ENCODE measurements at regions of chr2 and their contacts with region 1.

Region 1: DNA sequence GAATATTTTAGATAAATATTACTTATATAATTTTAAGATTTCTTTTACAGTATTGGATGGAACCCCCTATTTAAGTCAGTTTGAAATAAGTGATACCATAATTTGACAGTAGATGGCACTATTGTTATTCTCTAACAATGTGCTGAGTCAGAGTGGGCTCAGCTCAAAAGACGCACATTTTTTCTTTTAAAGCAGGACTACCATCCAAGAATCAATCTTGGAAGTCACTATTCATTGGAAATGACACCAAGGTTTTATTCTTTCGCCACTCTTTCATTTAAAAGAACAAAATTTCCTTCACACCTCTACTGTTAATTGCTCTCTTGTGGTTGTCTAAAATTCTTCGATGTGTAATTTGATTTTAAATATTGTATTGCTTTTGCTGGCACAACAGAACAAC is 32.6 kb upstream of the SPAG16 start:
- DNase-seq: peak in 2 of 9 experiments; percentile 59 to 71
- ATAC-seq: no peak
- H3K4me3 ChIP-seq: no peak overlapping the region
- H3K4me3 Mint-ChIP-seq: no peak overlapping the region
- H3K27ac ChIP-seq: no peak overlapping the region
- H3K27ac Mint-ChIP-seq: no peak overlapping the region
- H3K4me1 ChIP-seq: no peaks in the 10 kb centered on the region
- H3K4me1 Mint-ChIP-seq: peaks cover 2% of the 10 kb centered on the region
- H3K27me3 ChIP-seq: no peaks in the 10 kb centered on the region
- H3K27me3 Mint-ChIP-seq: no peaks in the 10 kb centered on the region
- CTCF ChIP-seq: peak; percentile 93

Region 2: GRCh38 chr2:212686285-212686895 is 565.2 kb before region 1 on chr2:
- CTCF ChIA-PET with region 1: interaction called, 3 read pairs
- POLR2A ChIA-PET with region 1: no interaction called
- intact Hi-C with region 1: loop called (anchors 1 to 2 kb)
- DNase-seq: peak; percentile 16 to 70 (median 54)
- ATAC-seq: peak; percentile 42
- H3K4me3 ChIP-seq: no peak overlapping the region
- H3K4me3 Mint-ChIP-seq: no peak overlapping the region
- H3K27ac ChIP-seq: no peak overlapping the region
- H3K27ac Mint-ChIP-seq: no peak overlapping the region
- H3K4me1 ChIP-seq: no peaks in the 10 kb centered on the region
- H3K4me1 Mint-ChIP-seq: peaks cover 2% of the 10 kb centered on the region
- H3K27me3 ChIP-seq: no peaks in the 10 kb centered on the region
- H3K27me3 Mint-ChIP-seq: no peaks in the 10 kb centered on the region
- CTCF ChIP-seq: peak; percentile 93

Region 3: DNA sequence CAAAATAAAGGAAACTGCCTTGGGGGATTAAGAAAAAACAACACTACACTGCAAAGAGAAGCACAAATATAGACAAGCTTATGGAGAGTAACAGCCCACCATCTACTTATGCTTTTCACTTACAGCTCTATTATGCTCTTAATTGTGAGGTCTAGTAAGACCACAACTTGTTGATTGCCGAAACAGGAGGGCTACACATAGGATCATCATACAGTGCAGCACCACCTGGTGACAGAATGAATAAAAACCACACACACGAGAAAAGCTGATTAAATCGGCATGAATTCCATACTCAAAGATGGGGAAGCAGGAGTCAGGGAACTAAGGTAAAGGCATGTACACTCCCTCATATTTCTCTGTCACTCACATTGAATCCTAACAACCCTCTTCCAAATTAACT is 359.4 kb before region 1 on chr2:
- CTCF ChIA-PET with region 1: no interaction called
- POLR2A ChIA-PET with region 1: no interaction called
- intact Hi-C with region 1: no loop called
- DNase-seq: peak in 2 of 9 experiments; percentile 25 to 34
- ATAC-seq: no peak
- H3K4me3 ChIP-seq: no peak overlapping the region
- H3K4me3 Mint-ChIP-seq: no peak overlapping the region
- H3K27ac ChIP-seq: no peak overlapping the region
- H3K27ac Mint-ChIP-seq: no peak overlapping the region
- H3K4me1 ChIP-seq: no peaks in the 10 kb centered on the region
- H3K4me1 Mint-ChIP-seq: peaks cover 4% of the 10 kb centered on the region
- H3K27me3 ChIP-seq: no peaks in the 10 kb centered on the region
- H3K27me3 Mint-ChIP-seq: no peaks in the 10 kb centered on the region
- CTCF ChIP-seq: no peak

Region 4: GRCh38 chr2:213290501-213290900 is 38.9 kb after region 1 on chr2:
- CTCF ChIA-PET with region 1: no interaction called
- POLR2A ChIA-PET with region 1: no interaction called
- intact Hi-C with region 1: no loop called
- DNase-seq: no peak
- ATAC-seq: no peak
- H3K4me3 ChIP-seq: no peak overlapping the region
- H3K4me3 Mint-ChIP-seq: no peak overlapping the region
- H3K27ac ChIP-seq: no peak overlapping the region
- H3K27ac Mint-ChIP-seq: no peak overlapping the region
- H3K4me1 ChIP-seq: no peaks in the 10 kb centered on the region
- H3K4me1 Mint-ChIP-seq: peaks cover 32% of the 10 kb centered on the region
- H3K27me3 ChIP-seq: no peaks in the 10 kb centered on the region
- H3K27me3 Mint-ChIP-seq: no peaks in the 10 kb centered on the region
- CTCF ChIP-seq: no peak

Region 5: GRCh38 chr2:213934560-213934959 is 682.9 kb after region 1 on chr2:
- CTCF ChIA-PET with region 1: interaction called, 23 read pairs
- POLR2A ChIA-PET with region 1: no interaction called
- intact Hi-C with region 1: loop called (anchors 1 kb)
- DNase-seq: peak in 3 of 9 experiments; percentile 9 to 41 (median 27)
- ATAC-seq: no peak
- H3K4me3 ChIP-seq: no peak overlapping the region
- H3K4me3 Mint-ChIP-seq: no peak overlapping the region
- H3K27ac ChIP-seq: no peak overlapping the region
- H3K27ac Mint-ChIP-seq: no peak overlapping the region
- H3K4me1 ChIP-seq: no peaks in the 10 kb centered on the region
- H3K4me1 Mint-ChIP-seq: no peaks in the 10 kb centered on the region
- H3K27me3 ChIP-seq: no peaks in the 10 kb centered on the region
- H3K27me3 Mint-ChIP-seq: no peaks in the 10 kb centered on the region
- CTCF ChIP-seq: peak; percentile 56

Region 6: GRCh38 chr2:214830794-214831346 is 1579.3 kb after region 1 on chr2:
- CTCF ChIA-PET with region 1: interaction called, 3 read pairs
- POLR2A ChIA-PET with region 1: no interaction called
- intact Hi-C with region 1: loop called (anchors 10 kb)
- DNase-seq: peak in 2 of 9 experiments; percentile 40 to 50
- ATAC-seq: peak; percentile 34
- H3K4me3 ChIP-seq: no peak overlapping the region
- H3K4me3 Mint-ChIP-seq: no peak overlapping the region
- H3K27ac ChIP-seq: no peak overlapping the region
- H3K27ac Mint-ChIP-seq: no peak overlapping the region
- H3K4me1 ChIP-seq: no peaks in the 10 kb centered on the region
- H3K4me1 Mint-ChIP-seq: no peaks in the 10 kb centered on the region
- H3K27me3 ChIP-seq: no peaks in the 10 kb centered on the region
- H3K27me3 Mint-ChIP-seq: no peaks in the 10 kb centered on the region
- CTCF ChIP-seq: peak; percentile 14